Heart right ventricle (tissue), 16 donors: ENCODE measurements at regions of chr11 and their contacts with region 1.

Region 1: DNA sequence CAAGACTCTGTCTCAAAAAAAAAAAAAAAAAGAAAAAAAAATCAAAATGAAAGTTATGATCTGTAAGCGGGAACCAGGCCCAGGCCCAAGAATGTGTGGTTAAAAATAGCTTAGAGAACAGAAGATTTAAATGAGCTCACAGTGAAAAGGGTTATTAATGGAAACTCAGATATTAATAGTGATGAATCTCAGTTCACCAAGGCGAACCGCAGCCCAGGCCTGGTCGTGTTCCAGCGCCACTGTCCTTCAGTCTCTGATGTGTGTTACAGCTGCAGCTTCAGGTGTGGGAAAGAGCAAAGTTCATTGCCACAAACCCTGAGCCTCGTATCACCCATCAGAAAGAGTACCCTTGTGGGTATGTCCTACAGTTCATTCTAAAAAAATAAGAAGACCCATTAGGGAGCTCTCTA is 107.1 kb downstream of the GAB2 start:
- DNase-seq: peak; percentile 73 to 77
- ATAC-seq: peak; percentile 85 to 95 (median 88)
- H3K4me3 ChIP-seq: peak overlapping the region in 4 of 10 donors; percentile 23 to 30 (median 26)
- H3K27ac ChIP-seq: peak overlapping the region in 9 of 10 donors; percentile 6 to 80 (median 70)
- H3K4me1 ChIP-seq: peaks cover 20 to 69% (median 61%) of the 10 kb centered on the region in 9 donors
- H3K27me3 ChIP-seq: no peaks in the 10 kb centered on the region
- CTCF ChIP-seq: no peak

Region 2: GRCh38 chr11:78268591-78269410 is 41.7 kb before region 1 on chr11:
- intact Hi-C with region 1: loop called in 1 of 10 experiments (anchors 5 kb)
- DNase-seq: peak; percentile 29 to 58
- ATAC-seq: peak; percentile 90 to 96 (median 92)
- H3K4me3 ChIP-seq: no peak overlapping the region
- H3K27ac ChIP-seq: peak overlapping the region in 9 of 10 donors; percentile 43 to 79 (median 68)
- H3K4me1 ChIP-seq: peaks cover 0 to 50% (median 23%) of the 10 kb centered on the region in 9 donors
- H3K27me3 ChIP-seq: no peaks in the 10 kb centered on the region
- CTCF ChIP-seq: no peak